Activated CD4-positive, alpha-beta T cell treated with anti-CD3 and anti-CD28 coated beads for 36 hours (primary cell): ENCODE measurements at regions of chr3 and their contacts with region 1.

Region 1: DNA sequence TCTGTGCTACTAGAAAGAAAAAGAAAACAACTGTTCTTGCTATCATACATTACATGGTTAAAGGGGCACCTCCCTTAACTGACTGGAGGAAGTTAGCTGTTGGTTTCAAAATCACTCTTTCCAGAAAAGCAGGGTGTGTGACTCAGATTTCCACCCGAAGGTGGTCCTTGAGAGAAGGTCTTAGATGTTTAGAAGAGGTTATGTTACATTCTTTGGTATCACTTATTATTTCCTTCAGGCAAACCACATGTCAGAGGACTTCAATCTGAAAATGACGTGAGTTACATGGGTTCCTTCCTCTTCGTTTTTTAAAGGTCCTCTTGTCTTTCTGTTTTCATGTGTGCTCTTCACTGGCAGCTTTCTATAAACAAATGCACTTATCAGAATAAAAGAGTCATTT is 307.9 kb upstream of the CBLB start:
- DNase-seq: peak; percentile 74
- ATAC-seq: peak; percentile 89
- H3K4me3 Mint-ChIP-seq: peak overlapping the region; percentile 52
- H3K27ac Mint-ChIP-seq: peak overlapping the region; percentile 92
- H3K4me1 Mint-ChIP-seq: peaks cover 66% of the 10 kb centered on the region
- H3K27me3 Mint-ChIP-seq: no peaks in the 10 kb centered on the region

Region 2: DNA sequence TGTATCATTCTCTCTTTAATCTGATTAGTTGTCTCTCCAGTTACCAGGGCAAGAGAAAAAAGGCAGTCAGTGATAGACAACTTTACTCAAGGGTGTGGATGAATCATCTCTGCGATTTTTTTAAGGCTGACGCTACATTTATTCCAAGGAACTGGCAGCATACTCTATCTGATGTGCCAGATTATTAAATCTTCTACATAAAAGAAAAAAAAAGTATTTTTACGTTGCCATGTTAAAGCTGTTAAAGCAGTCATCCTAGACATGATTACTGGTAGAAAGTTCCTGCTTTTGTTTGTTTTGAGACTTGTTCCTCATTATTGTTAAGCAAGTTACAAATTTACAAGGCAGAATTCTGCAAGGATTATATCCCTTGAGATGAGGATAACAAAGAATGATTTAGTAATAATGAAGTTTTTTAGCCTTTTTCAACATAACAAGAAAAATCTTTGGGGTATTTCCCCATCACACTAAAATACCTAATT is 429.6 kb before region 1 on chr3:
- CTCF ChIA-PET with region 1: no interaction called
- POLR2A ChIA-PET with region 1: no interaction called
- intact Hi-C with region 1: loop called (anchors 2 to 10 kb)
- DNase-seq: no peak
- ATAC-seq: peak; percentile 88
- H3K4me3 Mint-ChIP-seq: peak overlapping the region; percentile 50
- H3K27ac Mint-ChIP-seq: peak overlapping the region; percentile 91
- H3K4me1 Mint-ChIP-seq: peaks cover 69% of the 10 kb centered on the region
- H3K27me3 Mint-ChIP-seq: no peaks in the 10 kb centered on the region

Region 3: GRCh38 chr3:105868742-105869530 is 307.8 kb before region 1 on chr3 and contains the start of gene CBLB:
- CTCF ChIA-PET with region 1: no interaction called
- POLR2A ChIA-PET with region 1: interaction called, 3 read pairs
- intact Hi-C with region 1: loop called (anchors 2 kb)
- DNase-seq: peak; percentile 91
- ATAC-seq: peak; percentile 86
- H3K4me3 Mint-ChIP-seq: peak within 1 kb of the TSS; percentile 100
- H3K27ac Mint-ChIP-seq: peak within 1 kb of the TSS; percentile 100
- H3K4me1 Mint-ChIP-seq: peaks cover 36% of the 10 kb centered on the region
- H3K27me3 Mint-ChIP-seq: no peaks in the 10 kb centered on the region
- total RNA-seq, gene CBLB: 112 to 163 TPM

Region 4: GRCh38 chr3:106215047-106215446 is 38.3 kb after region 1 on chr3:
- CTCF ChIA-PET with region 1: interaction called, 3 read pairs
- POLR2A ChIA-PET with region 1: no interaction called
- intact Hi-C with region 1: loop called in 1 of 2 experiments (anchors 1 kb)
- DNase-seq: peak; percentile 62
- ATAC-seq: peak; percentile 91
- H3K4me3 Mint-ChIP-seq: no peak overlapping the region
- H3K27ac Mint-ChIP-seq: peak overlapping the region; percentile 73
- H3K4me1 Mint-ChIP-seq: peaks cover 59% of the 10 kb centered on the region
- H3K27me3 Mint-ChIP-seq: no peaks in the 10 kb centered on the region

Region 5: DNA sequence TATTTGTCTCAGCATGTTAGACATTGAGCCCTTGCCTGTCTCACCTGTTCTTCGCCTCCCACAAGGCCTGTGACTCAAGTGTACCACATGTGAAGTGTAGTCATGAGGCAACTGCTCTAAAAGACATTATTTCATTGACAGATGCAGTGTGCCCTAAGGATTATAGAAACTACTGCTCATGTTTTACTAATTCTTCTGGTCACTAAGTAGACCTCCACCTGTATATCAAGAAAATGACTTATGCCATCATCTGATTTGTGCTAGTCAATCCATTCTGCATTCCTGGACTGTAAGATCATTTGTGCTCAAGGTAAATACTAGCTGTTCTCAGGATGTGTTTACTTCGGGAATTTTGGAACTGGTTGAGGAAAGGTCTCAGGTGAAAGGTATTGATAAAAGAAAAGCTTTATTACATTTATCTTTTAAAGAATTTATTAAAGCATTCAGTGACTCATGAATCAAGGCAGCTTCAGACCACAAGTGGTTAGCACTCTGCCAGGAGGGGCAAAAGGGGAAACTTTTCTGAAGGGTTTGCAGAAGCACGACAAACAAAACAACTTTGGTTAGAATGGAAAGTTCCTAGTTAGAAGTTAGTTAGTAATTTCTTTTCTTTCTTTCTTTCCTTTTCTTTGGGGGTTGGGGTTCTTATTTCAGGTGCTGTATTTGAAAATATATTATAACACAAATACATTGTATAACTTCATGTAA is 157.3 kb after region 1 on chr3:
- CTCF ChIA-PET with region 1: no interaction called
- POLR2A ChIA-PET with region 1: no interaction called
- intact Hi-C with region 1: loop called (anchors 1 kb)
- DNase-seq: peak; percentile 84
- ATAC-seq: peak; percentile 70
- H3K4me3 Mint-ChIP-seq: peak overlapping the region; percentile 67
- H3K27ac Mint-ChIP-seq: peak overlapping the region; percentile 97
- H3K4me1 Mint-ChIP-seq: peaks cover 89% of the 10 kb centered on the region
- H3K27me3 Mint-ChIP-seq: no peaks in the 10 kb centered on the region

Region 6: GRCh38 chr3:106609666-106610301 is 433.1 kb after region 1 on chr3:
- CTCF ChIA-PET with region 1: interaction called, 3 read pairs
- POLR2A ChIA-PET with region 1: no interaction called
- intact Hi-C with region 1: loop called in 1 of 2 experiments (anchors 5 kb)
- DNase-seq: peak; percentile 78
- ATAC-seq: peak; percentile 81
- H3K4me3 Mint-ChIP-seq: no peak overlapping the region
- H3K27ac Mint-ChIP-seq: peak overlapping the region; percentile 81
- H3K4me1 Mint-ChIP-seq: peaks cover 29% of the 10 kb centered on the region
- H3K27me3 Mint-ChIP-seq: peaks cover 4% of the 10 kb centered on the region